CD4-positive, alpha-beta memory T cell (primary cell): ENCODE measurements at regions of chr3 and their contacts with region 1.

Region 1: DNA sequence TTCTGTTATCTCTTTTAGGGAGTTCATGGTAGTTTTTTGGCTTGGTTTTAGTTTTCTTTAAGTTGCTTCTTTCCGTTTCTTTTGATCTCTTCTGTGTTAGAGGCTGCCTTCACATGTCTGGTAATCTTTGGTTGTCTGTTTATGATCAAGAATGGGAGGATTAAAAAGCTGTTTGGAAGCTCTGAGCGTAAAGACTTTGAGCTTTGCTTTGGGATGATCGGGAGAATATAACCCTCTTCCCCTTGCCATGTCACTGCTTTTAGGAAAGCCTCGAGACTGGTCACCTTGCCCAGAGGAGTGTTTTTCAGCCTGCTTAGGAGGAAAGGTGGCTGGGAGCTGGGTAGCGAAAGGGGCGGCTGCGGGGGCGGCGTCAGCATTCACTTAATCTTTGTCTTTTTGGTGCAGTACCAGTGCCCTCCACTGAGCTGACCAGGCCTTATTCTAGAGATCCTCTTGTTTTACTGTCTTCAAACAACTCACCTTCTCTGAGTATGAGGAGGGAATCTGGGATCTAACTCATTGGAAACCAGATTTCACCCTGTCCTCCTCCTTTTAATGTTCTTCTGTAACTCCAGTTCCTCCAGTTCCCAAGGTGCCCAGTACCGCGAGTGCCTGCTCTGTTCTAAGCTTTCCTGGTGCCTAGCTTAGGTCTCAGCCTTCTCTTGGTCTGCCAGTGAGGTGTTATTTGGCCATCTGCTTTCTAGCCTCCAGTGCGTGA is 15.5 kb downstream of the TATDN2 start:
- DNase-seq: peak; percentile 66 to 80 (median 71)
- H3K4me3 ChIP-seq: peak overlapping the region in 1 of 2 donors; percentile 22
- H3K4me3 Mint-ChIP-seq: peak overlapping the region; percentile 72 to 91 (median 80)
- H3K27ac ChIP-seq: peak overlapping the region; percentile 64
- H3K27ac Mint-ChIP-seq: peak overlapping the region; percentile 78 to 97 (median 91)
- H3K4me1 ChIP-seq: peaks cover 83% of the 10 kb centered on the region
- H3K4me1 Mint-ChIP-seq: peaks cover 48 to 93% (median 76%) of the 10 kb centered on the region in 4 donors
- H3K27me3 ChIP-seq: no peaks in the 10 kb centered on the region
- H3K27me3 Mint-ChIP-seq: no peaks in the 10 kb centered on the region

Region 2: DNA sequence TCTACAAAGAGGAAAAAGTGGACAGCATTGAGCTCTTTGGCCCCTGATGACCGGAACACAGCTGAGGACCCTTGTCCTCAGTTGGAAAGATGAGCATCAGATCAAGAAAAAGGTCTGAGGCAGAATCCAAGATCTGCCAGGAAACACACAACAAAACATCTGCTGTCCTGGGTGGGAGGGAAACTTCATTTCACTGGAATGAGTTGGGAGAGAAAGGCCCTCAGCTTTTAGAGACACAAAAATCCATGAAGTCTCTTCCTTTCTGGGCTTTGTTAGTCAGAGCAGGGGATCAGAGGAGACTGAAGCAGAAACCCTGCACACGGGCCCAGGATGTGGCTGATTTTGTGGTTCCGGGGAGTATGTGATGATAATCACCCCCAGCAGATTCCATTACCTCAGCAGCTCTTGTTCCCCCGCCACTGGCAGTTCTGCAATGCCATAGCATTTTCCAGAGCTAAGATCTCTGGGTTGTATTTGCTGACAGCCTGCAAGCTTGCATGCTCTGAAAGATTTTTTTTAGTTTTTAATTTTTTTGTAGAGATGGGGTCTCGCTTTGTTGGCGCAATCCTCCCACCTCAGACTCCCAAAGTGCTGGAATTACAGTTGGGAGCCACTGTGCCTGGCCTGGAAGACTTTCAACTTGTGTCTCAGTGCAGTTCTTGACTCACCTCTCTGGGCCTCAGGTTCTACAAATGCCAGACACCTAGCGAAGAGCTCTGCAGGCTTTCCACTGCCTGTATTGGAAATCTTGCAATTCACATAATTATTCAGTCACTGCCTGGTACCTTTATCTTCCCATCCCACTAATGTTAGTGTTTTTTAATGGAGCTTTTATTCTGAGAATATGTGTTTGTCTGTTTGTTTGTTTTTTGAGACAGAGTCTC is 21.4 kb before region 1 on chr3:
- CTCF ChIA-PET with region 1: interaction called, 67 read pairs
- POLR2A ChIA-PET with region 1: interaction called, 62 read pairs
- intact Hi-C with region 1: loop called (anchors 1 kb)
- DNase-seq: peak; percentile 80 to 94 (median 83)
- H3K4me3 ChIP-seq: peak overlapping the region; percentile 34 to 36
- H3K4me3 Mint-ChIP-seq: peak overlapping the region; percentile 77 to 90 (median 80)
- H3K27ac ChIP-seq: peak overlapping the region; percentile 47
- H3K27ac Mint-ChIP-seq: peak overlapping the region; percentile 89 to 97 (median 95)
- H3K4me1 ChIP-seq: peaks cover 54% of the 10 kb centered on the region
- H3K4me1 Mint-ChIP-seq: peaks cover 37 to 67% (median 53%) of the 10 kb centered on the region in 4 donors
- H3K27me3 ChIP-seq: no peaks in the 10 kb centered on the region
- H3K27me3 Mint-ChIP-seq: no peaks in the 10 kb centered on the region

Region 3: GRCh38 chr3:10253731-10254130 is 10.1 kb before region 1 on chr3:
- CTCF ChIA-PET with region 1: interaction called, 67 read pairs
- POLR2A ChIA-PET with region 1: interaction called, 62 read pairs
- intact Hi-C with region 1: loop called (anchors 1 kb)
- DNase-seq: no peak
- H3K4me3 ChIP-seq: no peak overlapping the region
- H3K4me3 Mint-ChIP-seq: peak overlapping the region in 6 of 8 donors; percentile 29 to 80 (median 55)
- H3K27ac ChIP-seq: no peak overlapping the region
- H3K27ac Mint-ChIP-seq: peak overlapping the region in 6 of 7 donors; percentile 60 to 86 (median 78)
- H3K4me1 ChIP-seq: peaks cover 68% of the 10 kb centered on the region
- H3K4me1 Mint-ChIP-seq: peaks cover 48 to 82% (median 70%) of the 10 kb centered on the region in 4 donors
- H3K27me3 ChIP-seq: no peaks in the 10 kb centered on the region
- H3K27me3 Mint-ChIP-seq: no peaks in the 10 kb centered on the region

Region 4: DNA sequence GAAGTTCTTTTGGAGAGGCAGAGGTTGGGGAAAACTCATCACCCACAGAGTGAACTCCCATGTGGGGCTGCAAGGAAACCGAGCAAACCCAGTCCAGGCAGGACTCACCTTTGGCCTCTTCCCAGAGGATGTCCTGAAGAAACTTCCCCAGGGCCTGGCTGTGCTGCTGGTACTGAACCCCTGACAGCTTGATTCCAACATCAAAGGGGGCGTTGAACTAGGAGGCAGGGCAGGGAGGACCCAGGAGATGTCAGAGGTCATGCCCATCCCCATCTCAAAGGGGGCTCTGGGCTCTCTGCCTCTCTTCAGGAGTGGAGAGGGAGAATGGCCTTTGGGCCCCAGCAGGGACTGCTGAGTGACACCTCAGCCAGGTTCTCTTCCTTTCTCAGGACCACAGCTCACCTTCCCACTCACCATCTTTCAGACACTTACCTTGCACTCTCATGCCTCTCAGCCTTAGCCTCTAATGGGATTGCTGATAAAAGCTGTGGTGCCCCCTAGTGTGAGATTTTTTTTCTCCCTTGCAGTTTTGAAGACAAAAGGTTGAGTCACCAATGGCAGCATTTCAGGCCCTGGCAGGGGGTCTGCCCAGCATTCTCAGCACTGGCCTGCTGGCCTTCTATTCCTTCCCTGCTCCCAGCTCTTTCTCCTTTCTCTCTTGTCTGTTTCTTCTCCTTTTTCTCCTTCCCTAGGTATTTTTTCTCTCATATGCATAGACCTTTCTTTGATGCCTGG is 23.0 kb after region 1 on chr3:
- CTCF ChIA-PET with region 1: interaction called, 14 read pairs
- POLR2A ChIA-PET with region 1: interaction called, 3 read pairs
- intact Hi-C with region 1: no loop called
- DNase-seq: peak in 3 of 5 donors; percentile 66 to 72 (median 66)
- H3K4me3 ChIP-seq: no peak overlapping the region
- H3K4me3 Mint-ChIP-seq: no peak overlapping the region
- H3K27ac ChIP-seq: no peak overlapping the region
- H3K27ac Mint-ChIP-seq: peak overlapping the region; percentile 2 to 57 (median 43)
- H3K4me1 ChIP-seq: peaks cover 23% of the 10 kb centered on the region
- H3K4me1 Mint-ChIP-seq: peaks cover 26 to 45% (median 29%) of the 10 kb centered on the region in 4 donors
- H3K27me3 ChIP-seq: no peaks in the 10 kb centered on the region
- H3K27me3 Mint-ChIP-seq: no peaks in the 10 kb centered on the region